ENCODE measurements at regions of chr17 and their contacts with region 1.

Region 1: GRCh38 chr17:59734226-59734625 is 26.8 kb downstream of the VMP1 start:
- DNase-seq: no peak
- H3K4me3 ChIP-seq: no peak overlapping the region
- H3K27ac ChIP-seq: no peak overlapping the region
- H3K4me1 ChIP-seq: peaks cover 4% of the 10 kb centered on the region
- H3K27me3 ChIP-seq: no peaks in the 10 kb centered on the region
- CTCF ChIP-seq: no peak
- POLR2A ChIP-seq: no peak

Region 2: DNA sequence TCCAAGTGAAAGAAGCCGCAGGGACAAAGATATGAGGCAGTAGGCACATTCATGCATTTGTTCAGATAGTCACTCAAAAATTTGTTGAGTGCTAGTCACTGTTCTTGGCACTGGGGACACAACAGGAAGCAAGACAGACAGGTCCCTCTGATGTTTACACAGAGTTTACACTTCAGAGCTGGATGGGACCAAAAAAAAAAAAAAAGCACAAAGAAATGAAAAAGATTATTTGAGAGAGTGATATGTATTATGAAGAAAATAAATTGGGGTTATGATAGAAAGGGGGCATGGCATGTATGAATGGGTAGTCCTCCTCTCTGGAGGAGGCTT is 406.3 kb before region 1 on chr17:
- CTCF ChIA-PET with region 1: no interaction called
- POLR2A ChIA-PET with region 1: no interaction called
- dilution Hi-C with region 1: no loop called
- intact Hi-C with region 1: no loop called
- DNase-seq: no peak
- H3K4me3 ChIP-seq: no peak overlapping the region
- H3K27ac ChIP-seq: peak overlapping the region; percentile 38
- H3K4me1 ChIP-seq: peaks cover 42% of the 10 kb centered on the region
- H3K27me3 ChIP-seq: no peaks in the 10 kb centered on the region
- CTCF ChIP-seq: no peak
- POLR2A ChIP-seq: no peak

Region 3: DNA sequence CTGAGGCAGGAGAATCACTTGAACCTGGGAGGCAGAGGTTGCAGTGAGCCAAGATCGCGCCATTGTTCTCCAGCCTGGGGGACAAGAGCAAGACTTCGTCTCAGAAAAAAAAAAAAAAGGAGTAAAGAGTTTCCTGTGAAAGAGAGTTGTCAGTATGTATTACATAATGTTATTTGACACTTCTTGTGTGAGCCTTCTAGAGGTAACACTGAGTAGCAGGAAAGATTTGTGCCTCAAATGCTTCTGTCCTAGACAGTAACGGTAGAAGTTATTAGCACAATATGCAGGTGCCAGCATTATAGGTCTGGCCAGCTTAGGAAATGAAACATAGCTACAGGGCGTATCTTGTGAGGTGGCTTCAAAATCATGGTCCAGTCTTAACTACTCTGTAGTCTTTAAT is 164.9 kb after region 1 on chr17:
- CTCF ChIA-PET with region 1: no interaction called
- POLR2A ChIA-PET with region 1: interaction called, 10 read pairs
- dilution Hi-C with region 1: no loop called
- intact Hi-C with region 1: no loop called
- DNase-seq: no peak
- H3K4me3 ChIP-seq: no peak overlapping the region
- H3K27ac ChIP-seq: no peak overlapping the region
- H3K4me1 ChIP-seq: peaks cover 4% of the 10 kb centered on the region
- H3K27me3 ChIP-seq: no peaks in the 10 kb centered on the region
- CTCF ChIP-seq: no peak
- POLR2A ChIP-seq: no peak

Region 4: GRCh38 chr17:60036796-60037612 is 302.8 kb after region 1 on chr17:
- CTCF ChIA-PET with region 1: no interaction called
- POLR2A ChIA-PET with region 1: no interaction called
- dilution Hi-C with region 1: no loop called
- intact Hi-C with region 1: no loop called
- DNase-seq: peak; percentile 75
- H3K4me3 ChIP-seq: no peak overlapping the region
- H3K27ac ChIP-seq: no peak overlapping the region
- H3K4me1 ChIP-seq: peaks cover 4% of the 10 kb centered on the region
- H3K27me3 ChIP-seq: peaks cover 4 to 13% of the 10 kb centered on the region in 2 experiments
- CTCF ChIP-seq: peak; percentile 96 to 97
- POLR2A ChIP-seq: no peak

Measured in endothelial cell of umbilical vein (primary cell).